Activated B cell treated with CpG ODN at 0.5 μM for 24 hours (primary cell): ENCODE measurements at regions of chr1 and their contacts with region 1.

Region 1: DNA sequence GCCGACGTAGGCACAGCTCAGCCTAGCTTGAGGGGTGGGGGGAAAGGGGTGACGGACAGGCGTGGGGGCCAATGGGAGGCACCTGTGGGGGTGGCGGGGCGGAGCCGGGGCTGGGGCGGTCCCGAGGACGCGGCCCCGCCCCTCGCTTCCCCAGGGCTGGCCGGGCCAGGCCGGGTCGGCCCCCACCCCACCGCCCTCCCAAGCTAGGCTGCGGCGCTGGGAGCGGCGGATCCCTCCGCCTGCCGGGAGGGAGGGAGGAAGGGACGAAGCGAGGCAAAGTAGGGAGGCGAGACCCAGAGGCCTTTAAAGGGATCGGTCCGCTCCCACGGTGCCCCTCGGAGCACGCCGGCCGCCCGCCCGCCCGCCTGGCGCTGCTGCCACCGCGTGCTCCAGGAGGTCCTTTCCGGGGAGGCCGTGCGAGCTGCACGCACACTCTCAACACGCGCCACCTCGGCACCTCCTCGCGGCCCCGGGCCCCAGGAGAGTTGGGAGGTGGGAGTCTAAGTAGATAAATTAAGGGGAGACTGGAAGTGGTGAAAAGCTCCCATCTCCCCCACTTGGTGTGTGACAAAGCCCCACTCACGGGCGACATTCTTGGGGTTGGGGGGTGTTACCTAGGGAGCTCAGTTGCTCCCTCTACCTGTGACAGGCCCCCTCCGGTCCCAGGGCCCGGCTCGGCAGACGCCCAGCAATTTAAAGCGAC is 373 bp upstream of the MEF2D start:
- DNase-seq: peak; percentile 94
- ATAC-seq: peak; percentile 65
- H3K4me3 Mint-ChIP-seq: peak overlapping the region; percentile 94
- H3K27ac Mint-ChIP-seq: peak overlapping the region; percentile 97
- H3K4me1 Mint-ChIP-seq: peaks cover 78% of the 10 kb centered on the region
- H3K27me3 Mint-ChIP-seq: no peaks in the 10 kb centered on the region
- CTCF ChIP-seq: no peak

Region 2: GRCh38 chr1:156338180-156338973 is 162.6 kb before region 1 on chr1 and contains the starts of genes CCT3 and TSACC:
- CTCF ChIA-PET with region 1: no interaction called
- POLR2A ChIA-PET with region 1: no interaction called
- intact Hi-C with region 1: loop called (anchors 1 kb)
- DNase-seq: peak; percentile 99
- ATAC-seq: peak; percentile 95
- H3K4me3 Mint-ChIP-seq: peak within 1 kb of the TSS; percentile 97
- H3K27ac Mint-ChIP-seq: peak within 1 kb of the TSS; percentile 97
- H3K4me1 Mint-ChIP-seq: peaks cover 40% of the 10 kb centered on the region
- H3K27me3 Mint-ChIP-seq: no peaks in the 10 kb centered on the region
- CTCF ChIP-seq: no peak
- total RNA-seq, gene CCT3: 255 and 260 TPM in 2 replicates
- total RNA-seq, gene TSACC: 0.44 TPM in 1 of 2 replicates, not detected in the other

Region 3: GRCh38 chr1:156480411-156481192 is 20.3 kb before region 1 on chr1:
- CTCF ChIA-PET with region 1: interaction called, 164 read pairs
- POLR2A ChIA-PET with region 1: interaction called, 1,179 read pairs
- intact Hi-C with region 1: loop called (anchors 1 kb)
- DNase-seq: peak; percentile 65
- ATAC-seq: peak; percentile 87
- H3K4me3 Mint-ChIP-seq: peak overlapping the region; percentile 68
- H3K27ac Mint-ChIP-seq: peak overlapping the region; percentile 87
- H3K4me1 Mint-ChIP-seq: peaks cover 56% of the 10 kb centered on the region
- H3K27me3 Mint-ChIP-seq: no peaks in the 10 kb centered on the region
- CTCF ChIP-seq: peak; percentile 55

Region 4: DNA sequence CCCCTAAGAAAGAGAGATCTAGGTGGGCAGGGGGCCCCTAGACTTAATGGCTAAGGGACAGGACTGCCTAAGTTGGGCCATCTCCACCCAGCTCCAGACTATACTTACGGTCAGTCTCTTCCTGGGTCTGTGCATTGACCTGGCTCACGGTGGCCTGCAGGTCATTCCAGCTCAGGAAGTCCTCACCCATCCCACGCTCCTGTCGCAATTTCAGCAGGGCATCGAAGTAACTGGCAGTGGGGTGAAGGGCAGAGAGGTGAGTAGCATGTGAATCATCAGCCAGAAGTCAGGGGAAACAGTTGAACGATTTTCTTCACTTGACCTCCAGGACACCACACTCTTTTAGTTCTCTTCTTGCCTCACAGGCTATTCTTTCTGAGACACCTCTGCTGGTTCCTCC is 50.9 kb after region 1 on chr1:
- CTCF ChIA-PET with region 1: interaction called, 6 read pairs
- POLR2A ChIA-PET with region 1: interaction called, 19 read pairs
- intact Hi-C with region 1: loop called (anchors 5 kb)
- DNase-seq: no peak
- ATAC-seq: no peak
- H3K4me3 Mint-ChIP-seq: no peak overlapping the region
- H3K27ac Mint-ChIP-seq: peak overlapping the region; percentile 66
- H3K4me1 Mint-ChIP-seq: peaks cover 49% of the 10 kb centered on the region
- H3K27me3 Mint-ChIP-seq: no peaks in the 10 kb centered on the region
- CTCF ChIP-seq: no peak

Region 5: GRCh38 chr1:156591432-156592157 is 90.6 kb after region 1 on chr1 and contains the start of gene NAXE:
- CTCF ChIA-PET with region 1: interaction called, 4 read pairs
- POLR2A ChIA-PET with region 1: interaction called, 44 read pairs
- intact Hi-C with region 1: no loop called
- DNase-seq: peak; percentile 78
- ATAC-seq: peak; percentile 94
- H3K4me3 Mint-ChIP-seq: peak within 1 kb of the TSS; percentile 90
- H3K27ac Mint-ChIP-seq: peak within 1 kb of the TSS; percentile 94
- H3K4me1 Mint-ChIP-seq: peaks cover 21% of the 10 kb centered on the region
- H3K27me3 Mint-ChIP-seq: no peaks in the 10 kb centered on the region
- CTCF ChIP-seq: no peak
- total RNA-seq, gene NAXE: 75.6 and 84.5 TPM in 2 replicates

Region 6: DNA sequence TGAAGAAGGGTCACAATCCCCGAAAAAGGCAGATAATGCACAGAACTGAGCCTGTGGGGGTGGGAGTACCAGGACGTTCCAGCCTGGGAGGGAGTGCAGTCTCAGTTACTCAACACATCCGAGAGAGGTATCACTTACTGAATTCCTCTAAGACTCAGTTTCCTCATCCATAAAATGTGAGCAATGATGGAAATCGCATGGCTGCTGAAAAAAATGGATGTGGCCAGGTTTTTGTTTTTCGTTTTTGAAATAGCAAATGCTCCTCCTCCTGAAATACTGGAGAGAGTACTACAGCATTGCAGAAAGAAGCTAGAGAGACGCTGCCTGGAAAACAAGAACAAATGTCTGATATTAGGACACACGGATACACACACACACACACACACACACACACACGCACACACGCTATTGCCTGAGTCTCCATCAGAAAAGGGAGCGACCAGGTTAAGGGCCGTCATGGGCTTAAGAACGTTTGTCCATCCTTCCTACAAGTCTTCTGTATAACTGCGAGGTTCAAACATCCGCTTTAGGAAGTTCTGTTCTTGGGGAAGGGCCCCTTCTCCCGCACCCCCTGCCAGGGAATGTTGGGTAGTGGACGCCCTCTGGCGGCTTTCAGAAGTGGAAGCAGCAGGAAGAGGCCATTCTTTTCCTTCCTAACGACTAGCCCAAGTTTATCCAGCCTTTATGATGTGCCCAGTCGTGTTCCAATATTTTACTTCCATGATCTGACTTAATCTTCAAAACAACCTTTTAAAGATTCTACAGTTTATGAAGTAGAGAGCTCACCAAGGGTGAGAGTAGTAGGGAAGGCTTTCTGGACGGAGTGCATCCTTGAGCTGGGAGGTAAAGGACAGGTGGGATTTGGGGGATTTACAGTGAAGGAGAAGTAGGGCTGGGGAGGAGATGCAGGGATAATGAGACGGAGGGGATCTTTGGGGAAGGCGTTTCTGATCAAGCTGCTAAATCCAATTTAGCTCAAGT is 177.0 kb after region 1 on chr1:
- CTCF ChIA-PET with region 1: no interaction called
- POLR2A ChIA-PET with region 1: interaction called, 11 read pairs
- intact Hi-C with region 1: no loop called
- DNase-seq: no peak
- ATAC-seq: peak; percentile 49
- H3K4me3 Mint-ChIP-seq: peak overlapping the region; percentile 32
- H3K27ac Mint-ChIP-seq: no peak overlapping the region
- H3K4me1 Mint-ChIP-seq: peaks cover 27% of the 10 kb centered on the region
- H3K27me3 Mint-ChIP-seq: peaks cover 69% of the 10 kb centered on the region
- CTCF ChIP-seq: no peak

Region 7: GRCh38 chr1:156767101-156767878 is 266.3 kb after region 1 on chr1 and contains the start of gene PRCC:
- CTCF ChIA-PET with region 1: no interaction called
- POLR2A ChIA-PET with region 1: interaction called, 3 read pairs
- intact Hi-C with region 1: loop called (anchors 1 kb)
- DNase-seq: peak; percentile 88
- ATAC-seq: peak; percentile 91
- H3K4me3 Mint-ChIP-seq: no peak within 1 kb of the TSS
- H3K27ac Mint-ChIP-seq: no peak within 1 kb of the TSS
- H3K4me1 Mint-ChIP-seq: peaks cover 38% of the 10 kb centered on the region
- H3K27me3 Mint-ChIP-seq: no peaks in the 10 kb centered on the region
- CTCF ChIP-seq: no peak
- total RNA-seq, gene PRCC: 80.4 and 81.4 TPM in 2 replicates